Left cardiac atrium (tissue), 4 donors: ENCODE measurements at regions of chr18 and their contacts with region 1.

Region 1: GRCh38 chr18:70195852-70196434 is 9.5 kb downstream of the RTTN start:
- DNase-seq: no peak
- ATAC-seq: peak; percentile 62 to 76

Region 2: GRCh38 chr18:70288851-70289328 is 92.9 kb after region 1 on chr18 and contains the start of gene SOCS6:
- intact Hi-C with region 1: loop called in 1 of 2 experiments (anchors 10 kb)
- DNase-seq: peak; percentile 74
- ATAC-seq: peak; percentile 73 to 79
- total RNA-seq, gene SOCS6: 15.4 to 16.5 TPM

Region 3: DNA sequence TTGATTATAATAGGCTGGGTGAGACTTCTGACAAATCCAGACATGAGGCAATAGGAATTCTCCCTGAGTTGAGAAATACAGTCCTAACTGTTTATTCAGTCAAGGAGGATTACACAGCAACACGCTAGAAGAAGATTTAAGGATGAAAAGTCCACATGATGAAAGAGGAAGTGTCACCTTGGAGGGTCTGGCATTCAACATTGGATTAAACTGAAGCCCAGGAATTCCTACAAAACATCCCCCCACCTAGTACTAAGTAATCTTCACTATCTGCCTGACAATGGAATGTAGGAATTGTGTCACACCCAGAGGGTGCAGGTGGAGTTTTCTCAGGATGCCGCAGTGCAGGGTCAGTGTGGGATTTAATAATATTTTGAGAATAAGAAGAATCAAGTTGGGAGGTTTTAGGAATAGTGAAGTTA is 235.3 kb after region 1 on chr18:
- intact Hi-C with region 1: loop called (anchors 1 to 5 kb)
- DNase-seq: no peak
- ATAC-seq: no peak

Region 4: GRCh38 chr18:70454704-70455322 is 258.9 kb after region 1 on chr18:
- intact Hi-C with region 1: loop called in 1 of 2 experiments (anchors 5 kb)
- DNase-seq: no peak
- ATAC-seq: peak in 1 of 2 donors; percentile 50

Region 5: DNA sequence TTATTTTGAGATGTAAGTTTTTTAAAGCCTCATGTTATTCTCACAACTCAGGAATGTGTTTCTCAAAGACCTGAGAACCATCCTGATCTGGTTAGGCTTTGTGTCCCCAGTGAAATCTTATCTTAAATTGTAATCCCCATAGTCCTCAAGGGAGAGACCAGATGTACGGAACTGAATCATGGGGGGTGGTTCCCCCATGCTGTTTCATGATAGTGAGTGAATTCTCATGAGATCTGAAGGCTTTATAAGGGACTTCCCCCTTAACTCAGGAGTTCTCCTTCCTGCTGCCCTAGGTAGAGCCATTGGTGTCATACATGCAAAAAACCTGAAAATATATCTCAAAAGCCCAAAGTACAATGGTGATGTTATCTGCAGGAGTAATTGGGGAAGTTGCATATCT is 1511.5 kb after region 1 on chr18:
- intact Hi-C with region 1: no loop called
- DNase-seq: no peak
- ATAC-seq: no peak